ENCODE measurements at regions of chr1 and their contacts with region 1.

Region 1: DNA sequence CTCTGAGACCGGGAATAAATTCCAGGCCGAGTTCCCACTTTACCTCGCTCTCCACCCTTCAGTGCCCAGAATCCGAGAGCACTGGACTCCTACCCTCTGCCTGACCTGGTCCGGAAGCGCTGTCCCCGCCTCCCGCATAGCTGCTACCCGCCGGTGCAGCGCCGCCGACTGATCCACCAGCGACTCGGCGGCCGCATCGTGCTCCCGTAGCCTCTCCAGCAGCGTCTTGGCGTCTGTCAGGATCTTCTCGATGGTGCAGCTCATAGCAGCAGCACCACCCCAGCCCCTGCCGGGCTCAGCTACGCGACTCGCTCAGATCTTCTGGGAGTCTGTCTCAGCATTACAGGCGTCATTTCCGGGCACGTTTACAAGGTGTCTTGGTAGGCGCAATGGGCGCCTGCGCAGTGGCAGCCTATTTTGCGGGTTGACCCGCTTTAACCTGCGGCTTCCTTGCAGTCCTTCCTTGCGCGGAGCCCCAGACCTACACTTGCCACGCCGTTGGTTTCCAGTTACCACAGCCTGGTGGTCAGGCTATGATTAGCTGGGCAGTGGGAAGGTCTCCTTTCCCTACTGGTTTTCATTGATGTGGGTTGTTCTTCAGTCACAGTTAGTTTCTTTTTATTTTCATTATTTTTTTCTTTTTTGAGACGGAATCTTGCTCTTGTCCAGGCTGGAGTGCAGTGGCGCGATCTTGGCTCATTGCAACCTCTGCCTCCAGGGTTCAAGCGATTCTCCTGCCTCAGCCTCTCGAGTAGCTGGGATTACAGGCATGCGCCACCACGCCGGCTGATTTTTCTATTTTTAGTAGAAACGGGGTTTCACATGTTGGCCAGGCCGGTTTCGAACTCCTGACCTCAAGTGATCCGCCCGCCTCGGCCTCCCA is at the start of gene SIKE1:
- DNase-seq: peak; percentile 94
- ATAC-seq: peak; percentile 99
- H3K4me3 ChIP-seq: peak within 1 kb of the TSS; percentile 72
- H3K27ac ChIP-seq: peak within 1 kb of the TSS; percentile 93
- H3K4me1 ChIP-seq: no peaks in the 10 kb centered on the region
- H3K27me3 ChIP-seq: no peaks in the 10 kb centered on the region
- CTCF ChIP-seq: no peak; the same call in 1 of the 2 replicates
- POLR2A ChIP-seq: peak; percentile 87
- RAD21 ChIP-seq: 0 out of 2 replicates have a peak, but pooled peaks have one; percentile 13
- total RNA-seq, gene SIKE1: 49.1 and 59.4 TPM in 2 replicates

Region 2: GRCh38 chr1:114757455-114758250 is 22.9 kb before region 1 on chr1 and contains the start of gene CSDE1:
- CTCF ChIA-PET with region 1: no interaction called
- POLR2A ChIA-PET with region 1: no interaction called
- dilution Hi-C with region 1: no loop called
- in situ Hi-C with region 1: no loop called
- intact Hi-C with region 1: loop called (anchors 2 kb)
- DNase-seq: peak; percentile 99
- ATAC-seq: peak; percentile 93
- H3K4me3 ChIP-seq: peak within 1 kb of the TSS; percentile 67
- H3K27ac ChIP-seq: peak within 1 kb of the TSS; percentile 89
- H3K4me1 ChIP-seq: peaks cover 2% of the 10 kb centered on the region; the same call in 1 of the 2 replicates
- H3K27me3 ChIP-seq: no peaks in the 10 kb centered on the region
- CTCF ChIP-seq: peak; percentile 49
- POLR2A ChIP-seq: peak; percentile 98
- RAD21 ChIP-seq: peak; percentile 49
- total RNA-seq, gene CSDE1: 879 and 2,287 TPM in 2 replicates

Region 3: DNA sequence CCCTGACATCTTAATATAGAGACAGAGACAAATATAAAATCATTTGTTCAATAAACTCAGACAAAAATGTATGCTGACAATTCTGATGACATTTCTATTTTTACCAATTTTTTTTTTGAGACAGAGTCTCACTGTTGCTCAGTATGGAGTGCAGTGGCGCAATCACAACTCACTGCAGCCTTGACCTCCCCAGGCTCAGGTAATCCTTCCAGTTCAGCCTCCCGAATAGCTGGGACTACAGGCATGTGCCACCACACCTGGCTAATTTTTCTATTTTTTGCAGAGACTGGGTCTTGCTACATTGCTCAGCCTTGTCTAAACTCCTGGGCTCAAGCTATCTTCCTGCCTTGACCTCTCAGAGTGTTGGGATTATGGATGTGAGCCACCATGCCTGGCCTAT is 13.5 kb after region 1 on chr1:
- CTCF ChIA-PET with region 1: no interaction called
- POLR2A ChIA-PET with region 1: interaction called, 13 read pairs
- dilution Hi-C with region 1: no loop called
- in situ Hi-C with region 1: no loop called
- intact Hi-C with region 1: no loop called
- DNase-seq: no peak
- ATAC-seq: no peak
- H3K4me3 ChIP-seq: no peak overlapping the region
- H3K27ac ChIP-seq: no peak overlapping the region
- H3K4me1 ChIP-seq: no peaks in the 10 kb centered on the region
- H3K27me3 ChIP-seq: peaks cover 4% of the 10 kb centered on the region
- CTCF ChIP-seq: no peak
- POLR2A ChIP-seq: no peak
- RAD21 ChIP-seq: no peak

Measured in IMR-90 (cell line).